ENCODE measurements at regions of chr16 and their contacts with region 1.

Region 1: DNA sequence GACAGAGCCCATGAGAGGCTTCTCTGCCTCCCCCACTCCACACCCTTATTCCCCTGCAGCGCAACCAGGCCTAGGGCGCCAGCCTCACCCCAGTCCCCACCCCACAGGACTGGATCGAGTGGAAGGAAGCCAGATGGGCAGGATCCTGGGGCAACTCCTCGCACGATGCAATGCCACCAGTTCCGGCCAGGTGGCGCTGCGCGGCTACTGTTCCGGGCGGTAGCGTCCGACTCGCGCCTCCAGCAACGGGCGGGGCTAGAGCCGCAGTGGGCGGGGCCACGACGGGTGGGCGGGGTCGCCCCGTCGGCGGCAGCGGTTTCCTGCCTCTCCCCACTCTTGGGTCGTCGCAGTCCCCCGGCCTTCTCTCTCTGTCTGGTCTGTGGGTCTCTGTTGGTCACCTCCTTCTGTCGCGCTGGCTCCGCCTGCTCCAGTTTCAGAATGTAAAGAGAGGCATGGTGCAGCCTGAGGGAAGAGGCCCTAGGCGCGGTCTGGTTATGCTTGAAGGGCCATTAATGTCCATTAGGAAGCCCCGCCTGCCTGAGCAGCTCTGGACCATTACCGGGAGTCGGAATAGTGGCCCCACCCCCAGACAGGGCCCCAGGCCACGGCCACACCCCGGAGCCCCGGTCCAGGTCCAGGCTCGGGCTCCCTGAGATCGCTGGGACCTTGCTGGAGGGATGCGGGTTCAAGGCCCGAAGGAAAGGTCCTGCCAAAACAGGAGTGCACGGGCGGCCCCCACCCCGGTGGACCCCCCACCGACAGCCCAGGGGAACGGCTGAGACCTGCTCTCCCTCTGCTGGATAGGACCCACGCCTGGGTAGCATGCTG is 3.4 kb upstream of the NHERF2 start:
- DNase-seq: peak; percentile 94
- ATAC-seq: peak; percentile 94
- H3K4me3 ChIP-seq: peak overlapping the region in 4 of 5 experiments; percentile 34 to 57 (median 42)
- H3K4me3 Mint-ChIP-seq: peak overlapping the region; percentile 88
- H3K27ac ChIP-seq: no peak overlapping the region
- H3K27ac Mint-ChIP-seq: peak overlapping the region; percentile 85
- H3K4me1 ChIP-seq: peaks cover 34 to 41% of the 10 kb centered on the region in 2 donors
- H3K4me1 Mint-ChIP-seq: peaks cover 19% of the 10 kb centered on the region
- H3K27me3 ChIP-seq: peaks cover 0 to 64% (median 26%) of the 10 kb centered on the region in 4 experiments
- H3K27me3 Mint-ChIP-seq: peaks cover 25% of the 10 kb centered on the region
- CTCF ChIP-seq: peak; percentile 90

Region 2: DNA sequence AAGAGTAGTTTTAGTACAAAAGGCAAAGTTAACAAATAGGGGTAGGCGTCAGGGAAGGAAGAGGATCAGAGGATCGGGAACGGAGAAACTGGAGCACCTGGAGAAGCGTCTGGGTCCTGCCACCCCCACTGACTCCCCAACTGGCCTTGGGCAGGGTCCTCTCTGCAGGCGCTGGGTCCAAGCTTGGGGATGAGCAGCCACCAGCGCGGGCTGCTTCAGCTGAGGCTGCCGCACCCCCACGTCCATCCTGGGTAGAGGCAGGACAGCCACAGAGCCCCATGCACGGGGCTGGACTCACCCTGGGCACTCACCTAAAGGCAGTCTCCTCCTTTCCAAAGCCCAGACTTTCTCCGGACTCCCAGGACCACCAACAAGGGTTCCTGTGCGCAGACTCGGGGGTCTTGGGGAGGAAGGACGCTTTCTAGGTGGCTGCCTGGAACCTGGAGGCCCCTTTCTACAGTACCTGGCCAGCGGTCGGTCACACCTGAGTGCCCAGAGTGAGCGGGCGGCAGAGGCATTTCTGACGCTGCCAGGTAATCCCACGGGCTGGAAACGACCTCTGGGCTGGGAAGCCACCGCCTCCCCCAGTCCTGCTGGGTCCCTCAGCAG is 106.2 kb before region 1 on chr16:
- CTCF ChIA-PET with region 1: no interaction called
- POLR2A ChIA-PET with region 1: interaction called, 10 read pairs
- intact Hi-C with region 1: no loop called
- DNase-seq: no peak
- ATAC-seq: no peak
- H3K4me3 ChIP-seq: no peak overlapping the region
- H3K4me3 Mint-ChIP-seq: peak overlapping the region; percentile 19
- H3K27ac ChIP-seq: no peak overlapping the region
- H3K27ac Mint-ChIP-seq: no peak overlapping the region
- H3K4me1 ChIP-seq: no peaks in the 10 kb centered on the region
- H3K4me1 Mint-ChIP-seq: peaks cover 4% of the 10 kb centered on the region
- H3K27me3 ChIP-seq: peaks cover 0 to 54% (median 9%) of the 10 kb centered on the region in 4 experiments
- H3K27me3 Mint-ChIP-seq: peaks cover 31% of the 10 kb centered on the region
- CTCF ChIP-seq: no peak

Region 3: GRCh38 chr16:1964506-1965395 is 58.6 kb before region 1 on chr16 and contains the start of gene RPS2:
- CTCF ChIA-PET with region 1: no interaction called
- POLR2A ChIA-PET with region 1: interaction called, 12 read pairs
- intact Hi-C with region 1: loop called (anchors 2 kb)
- DNase-seq: peak; percentile 99
- ATAC-seq: peak; percentile 93
- H3K4me3 ChIP-seq: peak within 1 kb of the TSS; percentile 60 to 94 (median 76)
- H3K4me3 Mint-ChIP-seq: peak within 1 kb of the TSS; percentile 94
- H3K27ac ChIP-seq: peak within 1 kb of the TSS; percentile 83 to 100
- H3K27ac Mint-ChIP-seq: peak within 1 kb of the TSS; percentile 97
- H3K4me1 ChIP-seq: peaks cover 26 to 49% of the 10 kb centered on the region in 2 donors
- H3K4me1 Mint-ChIP-seq: peaks cover 42% of the 10 kb centered on the region
- H3K27me3 ChIP-seq: no peaks in the 10 kb centered on the region
- H3K27me3 Mint-ChIP-seq: no peaks in the 10 kb centered on the region
- CTCF ChIP-seq: no peak
- total RNA-seq, gene RPS2: 3,155 and 3,261 TPM in 2 replicates

Region 4: DNA sequence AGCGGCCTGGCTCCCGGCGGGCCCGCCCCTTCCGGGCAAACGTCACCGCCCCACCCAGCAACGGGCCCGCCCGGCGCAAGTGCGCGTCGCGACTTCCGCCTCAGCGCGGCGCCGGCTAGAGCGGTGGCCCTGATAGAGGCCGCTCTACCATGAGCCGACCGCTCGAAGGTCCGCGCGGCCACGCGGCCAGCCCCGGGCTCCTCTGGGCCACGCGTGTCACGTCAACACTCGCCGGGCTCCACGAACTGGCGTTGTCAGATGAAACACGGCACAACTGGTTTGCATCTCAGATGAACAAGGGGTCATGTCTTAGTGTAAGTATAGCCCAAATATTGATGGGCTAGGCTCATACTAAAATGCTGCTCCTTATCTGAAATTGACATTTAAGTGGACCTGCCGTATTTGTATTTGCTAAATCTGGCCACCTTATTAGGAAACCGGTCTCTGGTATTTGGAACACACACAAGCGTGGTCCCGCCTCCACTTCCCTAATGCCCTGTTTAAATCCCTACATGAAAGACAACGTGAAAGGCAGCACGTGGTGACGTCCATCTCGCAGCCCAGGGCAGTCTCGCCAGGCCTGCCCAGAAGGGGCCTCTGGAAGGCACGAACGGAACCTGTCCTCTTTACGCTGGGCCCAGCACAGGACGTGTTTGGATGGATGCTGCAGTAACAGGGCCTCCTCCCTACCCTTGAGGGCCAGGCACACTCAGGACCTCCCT is 13.4 kb before region 1 on chr16 and contains the start of gene ZNF598:
- CTCF ChIA-PET with region 1: interaction called, 6 read pairs
- POLR2A ChIA-PET with region 1: interaction called, 4 read pairs
- intact Hi-C with region 1: loop called (anchors 1 kb)
- DNase-seq: peak; percentile 90
- ATAC-seq: peak; percentile 97
- H3K4me3 ChIP-seq: peak within 1 kb of the TSS; percentile 61 to 87 (median 77)
- H3K4me3 Mint-ChIP-seq: peak within 1 kb of the TSS; percentile 95
- H3K27ac ChIP-seq: peak within 1 kb of the TSS; percentile 87 to 95
- H3K27ac Mint-ChIP-seq: peak within 1 kb of the TSS; percentile 95
- H3K4me1 ChIP-seq: peaks cover 35 to 44% of the 10 kb centered on the region in 2 donors
- H3K4me1 Mint-ChIP-seq: peaks cover 38% of the 10 kb centered on the region
- H3K27me3 ChIP-seq: no peaks in the 10 kb centered on the region
- H3K27me3 Mint-ChIP-seq: no peaks in the 10 kb centered on the region
- CTCF ChIP-seq: no peak
- total RNA-seq, gene ZNF598: 49.5 and 50.3 TPM in 2 replicates

Region 5: DNA sequence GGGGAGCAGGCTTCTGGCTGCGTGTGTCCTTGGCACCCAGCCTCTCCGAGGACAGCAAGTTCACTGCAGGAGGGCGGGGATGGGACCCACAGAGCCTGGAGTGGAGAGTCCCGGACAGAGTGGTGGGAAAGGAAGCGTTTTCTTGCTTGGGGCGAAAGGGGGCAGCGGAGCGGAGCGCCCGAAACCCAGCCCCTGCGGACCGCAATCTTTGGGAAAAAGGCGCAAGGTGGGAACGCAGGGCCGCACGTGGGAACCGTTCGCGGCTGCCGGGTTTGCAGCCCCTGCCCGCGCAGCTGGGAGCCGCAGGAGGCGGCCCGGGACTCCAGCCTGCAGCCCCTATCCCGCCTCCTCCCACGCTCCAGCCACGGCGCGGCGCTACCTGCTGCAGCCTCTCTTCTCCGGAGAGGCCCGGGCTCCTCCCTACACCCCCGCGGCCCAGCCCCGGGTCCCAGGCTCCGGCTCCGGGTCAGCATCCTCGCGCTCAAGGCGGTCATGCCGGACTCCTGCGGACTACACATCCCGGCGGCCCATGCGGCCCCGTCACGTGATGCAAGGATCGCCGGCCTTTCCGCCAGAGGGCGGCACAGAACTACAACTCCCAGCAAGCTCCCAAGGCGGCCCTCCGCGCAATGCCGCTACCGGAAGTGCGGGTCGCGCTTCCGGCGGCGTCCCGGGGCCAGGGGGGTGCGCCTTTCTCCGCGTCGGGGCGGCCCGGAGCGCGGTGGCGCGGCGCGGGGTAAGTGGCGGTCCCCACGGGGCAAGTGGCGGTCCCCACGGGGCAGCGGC is 24.2 kb after region 1 on chr16 and contains the starts of genes NTHL1 and TSC2:
- CTCF ChIA-PET with region 1: interaction called, 7 read pairs
- POLR2A ChIA-PET with region 1: no interaction called
- intact Hi-C with region 1: loop called (anchors 1 kb)
- DNase-seq: peak; percentile 95
- ATAC-seq: peak; percentile 97
- H3K4me3 ChIP-seq: peak within 1 kb of the TSS; percentile 27 to 79 (median 78)
- H3K4me3 Mint-ChIP-seq: peak within 1 kb of the TSS; percentile 91
- H3K27ac ChIP-seq: peak within 1 kb of the TSS in 1 of 2 donors; percentile 63
- H3K27ac Mint-ChIP-seq: peak within 1 kb of the TSS; percentile 76
- H3K4me1 ChIP-seq: peaks cover 17 to 35% of the 10 kb centered on the region in 2 donors
- H3K4me1 Mint-ChIP-seq: peaks cover 20% of the 10 kb centered on the region
- H3K27me3 ChIP-seq: no peaks in the 10 kb centered on the region
- H3K27me3 Mint-ChIP-seq: no peaks in the 10 kb centered on the region
- CTCF ChIP-seq: peak; percentile 26
- total RNA-seq, gene NTHL1: 14.1 and 17.5 TPM in 2 replicates
- total RNA-seq, gene TSC2: 188 and 194 TPM in 2 replicates

Region 6: DNA sequence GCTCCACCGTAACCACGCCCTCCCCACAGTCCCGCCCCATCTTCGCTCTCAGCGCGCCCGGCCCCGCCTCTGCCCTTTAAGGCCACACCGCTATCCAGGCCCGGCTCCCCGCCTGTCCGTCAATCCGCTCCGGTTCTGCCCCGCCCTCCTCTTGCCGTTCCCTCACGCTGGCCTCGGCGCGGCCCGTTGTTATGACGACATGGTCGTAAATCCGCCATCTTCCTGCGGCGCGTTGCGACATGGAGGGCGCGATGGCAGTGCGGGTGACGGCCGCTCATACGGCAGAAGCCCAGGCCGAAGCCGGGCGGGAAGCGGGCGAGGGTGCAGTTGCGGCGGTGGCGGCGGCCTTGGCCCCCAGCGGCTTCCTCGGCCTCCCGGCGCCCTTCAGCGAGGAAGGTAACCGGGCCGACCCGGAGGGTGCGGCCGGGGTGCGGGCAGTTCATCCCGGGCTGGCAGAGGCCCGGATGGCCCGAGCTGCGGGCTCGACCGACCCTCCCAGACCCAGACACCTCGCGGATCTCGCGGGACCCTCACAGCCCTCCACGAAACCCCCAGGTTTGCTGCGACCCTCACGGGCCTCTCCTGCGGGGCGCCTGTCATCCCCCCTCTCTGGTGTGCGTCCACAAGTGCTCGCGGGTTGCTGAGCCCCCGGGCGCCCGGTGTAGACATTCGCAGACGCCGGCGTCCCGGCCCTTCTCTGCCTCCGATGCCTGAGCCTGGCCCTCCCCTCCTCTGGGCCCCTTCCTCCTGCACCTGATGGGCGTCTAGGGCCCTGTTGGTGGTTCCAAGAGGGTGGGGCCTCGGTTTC is 200.3 kb after region 1 on chr16 and contains the start of gene E4F1:
- CTCF ChIA-PET with region 1: no interaction called
- POLR2A ChIA-PET with region 1: interaction called, 8 read pairs
- intact Hi-C with region 1: loop called (anchors 1 kb)
- DNase-seq: peak; percentile 100
- ATAC-seq: peak; percentile 99
- H3K4me3 ChIP-seq: peak within 1 kb of the TSS; percentile 51 to 92 (median 82)
- H3K4me3 Mint-ChIP-seq: peak within 1 kb of the TSS; percentile 86
- H3K27ac ChIP-seq: peak within 1 kb of the TSS; percentile 47 to 85
- H3K27ac Mint-ChIP-seq: peak within 1 kb of the TSS; percentile 86
- H3K4me1 ChIP-seq: peaks cover 6 to 16% of the 10 kb centered on the region in 2 donors
- H3K4me1 Mint-ChIP-seq: peaks cover 25% of the 10 kb centered on the region
- H3K27me3 ChIP-seq: no peaks in the 10 kb centered on the region
- H3K27me3 Mint-ChIP-seq: no peaks in the 10 kb centered on the region
- CTCF ChIP-seq: no peak
- total RNA-seq, gene E4F1: 41.8 and 43.0 TPM in 2 replicates

Region 7: DNA sequence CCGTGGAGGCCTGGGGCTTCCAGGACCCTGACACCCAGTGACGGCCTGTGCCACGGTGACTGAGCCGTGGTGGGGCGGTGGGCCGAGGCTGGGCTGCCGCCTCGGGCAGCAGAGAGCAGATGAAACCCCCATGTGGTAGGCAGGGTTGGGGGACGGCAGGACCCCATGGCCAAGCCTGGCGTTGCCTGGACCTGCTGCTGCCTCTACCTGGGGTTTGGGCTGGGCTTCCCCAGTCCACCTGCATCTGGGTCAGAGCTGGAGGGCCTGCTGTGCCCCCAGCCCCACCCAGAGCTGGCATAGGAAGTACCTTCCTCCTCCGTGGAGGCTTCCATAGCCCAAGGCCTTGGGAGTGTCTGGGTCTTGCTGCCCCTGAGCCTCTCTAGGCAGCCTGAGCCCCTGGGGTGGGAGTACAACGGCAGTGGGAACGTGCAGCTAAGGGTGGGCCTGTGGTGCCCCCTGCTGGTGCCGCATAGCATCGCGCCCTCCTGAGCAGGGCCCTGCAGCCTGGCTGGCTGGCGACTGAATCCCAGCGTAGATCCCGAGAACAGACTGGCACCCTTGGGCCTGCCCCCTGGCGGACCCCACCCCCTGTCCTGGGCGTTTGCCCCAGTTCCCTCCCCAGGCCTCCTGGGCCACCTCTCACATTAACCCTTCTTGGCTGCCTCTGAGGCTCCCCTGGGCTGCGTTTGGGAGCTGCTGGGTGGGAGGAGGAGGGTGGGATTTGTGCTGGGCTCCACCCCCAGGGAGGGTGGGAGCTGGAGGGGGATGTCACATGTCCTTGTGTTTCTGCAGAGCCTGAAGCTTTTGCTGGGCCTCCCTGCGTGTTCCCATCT is 477.8 kb after region 1 on chr16:
- CTCF ChIA-PET with region 1: interaction called, 5 read pairs
- POLR2A ChIA-PET with region 1: no interaction called
- intact Hi-C with region 1: loop called (anchors 10 kb)
- DNase-seq: peak; percentile 86
- ATAC-seq: peak; percentile 97
- H3K4me3 ChIP-seq: no peak overlapping the region
- H3K4me3 Mint-ChIP-seq: no peak overlapping the region
- H3K27ac ChIP-seq: no peak overlapping the region
- H3K27ac Mint-ChIP-seq: no peak overlapping the region
- H3K4me1 ChIP-seq: peaks cover 0 to 8% of the 10 kb centered on the region in 2 donors
- H3K4me1 Mint-ChIP-seq: peaks cover 11% of the 10 kb centered on the region
- H3K27me3 ChIP-seq: no peaks in the 10 kb centered on the region
- H3K27me3 Mint-ChIP-seq: no peaks in the 10 kb centered on the region
- CTCF ChIP-seq: peak; percentile 99

Measured in B cell (primary cell).